Heart left ventricle (tissue), 16 donors: ENCODE measurements at regions of chr15 and their contacts with region 1.

Region 1: DNA sequence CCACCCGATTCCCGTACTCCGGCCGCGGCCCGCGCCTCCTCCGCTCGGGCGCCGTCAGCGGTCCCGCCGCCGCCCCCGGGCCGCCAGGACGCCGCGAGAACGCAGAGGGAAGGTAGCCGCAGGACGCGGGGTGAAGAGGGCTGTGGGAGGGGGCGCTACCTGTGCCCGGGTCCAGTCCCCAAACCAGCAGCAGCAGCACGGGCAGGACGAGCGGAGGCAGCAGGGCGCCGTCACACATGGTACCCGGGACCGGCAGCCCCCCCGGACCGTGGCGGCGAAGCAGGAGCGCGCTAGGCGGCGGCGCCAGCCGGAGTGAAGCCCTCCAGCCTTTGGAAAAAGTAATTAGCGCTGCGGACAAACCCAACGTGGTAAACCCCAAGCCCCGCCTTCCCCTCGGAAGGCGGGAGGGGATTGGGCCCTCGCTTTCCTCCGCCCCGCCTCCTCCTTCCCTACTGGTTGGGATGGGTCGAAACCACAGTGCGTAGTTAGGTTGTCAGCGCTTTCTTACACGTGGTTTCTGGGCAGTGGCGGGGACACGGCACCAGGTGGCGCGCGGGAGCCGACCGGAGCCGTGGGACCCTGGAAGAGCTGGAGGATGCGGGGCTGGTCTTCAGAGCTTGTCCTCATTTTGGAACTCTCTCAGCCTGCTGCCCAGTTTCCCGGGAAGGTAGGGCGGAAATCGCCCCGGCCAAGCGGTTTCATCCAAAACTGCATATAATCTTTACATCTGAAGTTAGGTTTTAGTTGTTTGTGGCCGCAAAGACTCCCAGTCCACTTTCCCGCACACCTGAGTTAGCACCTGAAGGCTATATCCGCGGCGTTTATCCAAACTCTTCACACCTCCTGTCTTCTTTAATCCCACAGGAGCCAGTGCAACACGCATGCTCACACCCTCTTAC is at the start of gene ADAMTS17:
- DNase-seq: peak; percentile 94 to 97 (median 95)
- ATAC-seq: peak; percentile 99 to 100 (median 99)
- H3K4me3 ChIP-seq: peak within 1 kb of the TSS; percentile 61 to 95 (median 74)
- H3K27ac ChIP-seq: peak within 1 kb of the TSS in 8 of 12 donors; percentile 16 to 80 (median 45)
- H3K4me1 ChIP-seq: peaks cover 0 to 11% (median 6%) of the 10 kb centered on the region in 12 donors
- H3K27me3 ChIP-seq: peaks cover 0 to 28% (median 11%) of the 10 kb centered on the region in 9 donors
- CTCF ChIP-seq: peak; percentile 87 to 99 (median 94)
- POLR2A ChIP-seq: peak; percentile 77 to 95
- total RNA-seq, gene ADAMTS17: 0.52 to 2.4 (median 1.9) TPM

Region 2: GRCh38 chr15:98943601-98944151 is 1398.2 kb before region 1 on chr15:
- intact Hi-C with region 1: no loop called
- DNase-seq: peak in 4 of 5 donors; percentile 73 to 81 (median 78)
- ATAC-seq: peak; percentile 83 to 91 (median 86)
- H3K4me3 ChIP-seq: no peak overlapping the region
- H3K27ac ChIP-seq: peak overlapping the region in 11 of 12 donors; percentile 14 to 79 (median 72)
- H3K4me1 ChIP-seq: peaks cover 0 to 48% (median 19%) of the 10 kb centered on the region in 12 donors
- H3K27me3 ChIP-seq: no peaks in the 10 kb centered on the region
- CTCF ChIP-seq: peak in 1 of 12 donors; percentile 8
- POLR2A ChIP-seq: no peak

Region 3: DNA sequence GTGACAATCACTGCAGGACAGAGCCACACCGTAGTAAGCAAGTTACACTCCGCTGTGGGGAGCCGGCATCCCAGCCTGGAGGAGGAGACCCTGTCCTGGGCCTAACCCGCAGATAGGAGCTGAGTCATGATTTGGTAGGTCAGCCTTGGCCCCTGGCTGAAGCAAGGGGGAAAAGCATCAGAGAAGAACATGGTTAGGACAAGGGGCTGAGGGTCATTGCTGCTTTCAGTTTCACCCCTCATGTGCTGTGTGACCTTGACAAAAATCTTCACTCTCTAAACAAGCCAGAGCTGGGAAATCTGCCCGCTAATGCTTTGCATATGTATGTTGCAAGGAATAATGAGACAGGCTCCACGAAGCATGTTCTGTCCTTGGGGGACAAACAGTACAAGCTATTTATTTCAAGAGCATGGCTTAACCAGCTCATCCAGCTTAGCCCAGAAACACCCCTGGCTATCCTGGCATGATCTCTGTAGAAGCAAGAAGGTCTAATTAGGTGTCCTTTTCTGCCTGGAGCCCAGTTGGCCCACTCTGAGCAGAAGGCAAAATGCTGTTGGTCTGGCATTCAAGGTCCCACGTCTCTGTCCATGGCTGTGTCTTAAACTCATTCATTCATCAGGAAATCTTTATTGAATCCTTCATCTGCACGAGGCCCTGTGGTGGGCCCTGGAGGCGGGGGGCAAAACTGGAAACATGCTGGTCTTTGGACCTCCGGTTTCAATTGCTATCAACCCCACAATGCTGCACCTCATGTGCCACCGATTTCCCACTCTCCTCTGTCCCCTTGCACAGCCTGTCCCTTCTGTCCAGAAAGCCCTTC is 387.3 kb before region 1 on chr15:
- intact Hi-C with region 1: loop called in 1 of 10 experiments (anchors 10 kb)
- DNase-seq: peak in 1 of 5 donors; percentile 7
- ATAC-seq: no peak
- H3K4me3 ChIP-seq: no peak overlapping the region
- H3K27ac ChIP-seq: no peak overlapping the region
- H3K4me1 ChIP-seq: no peaks in the 10 kb centered on the region
- H3K27me3 ChIP-seq: peaks cover 0 to 1% (median 0%) of the 10 kb centered on the region in 9 donors
- CTCF ChIP-seq: no peak
- POLR2A ChIP-seq: no peak

Region 4: GRCh38 chr15:99961011-99961441 is 380.9 kb before region 1 on chr15:
- intact Hi-C with region 1: loop called in 5 of 10 experiments (anchors 2 to 10 kb)
- DNase-seq: peak in 2 of 5 donors; percentile 29 to 42
- ATAC-seq: peak in 3 of 4 donors; percentile 62 to 75 (median 68)
- H3K4me3 ChIP-seq: no peak overlapping the region
- H3K27ac ChIP-seq: no peak overlapping the region
- H3K4me1 ChIP-seq: no peaks in the 10 kb centered on the region
- H3K27me3 ChIP-seq: peaks cover 0 to 8% (median 0%) of the 10 kb centered on the region in 9 donors
- CTCF ChIP-seq: peak in 10 of 12 donors; percentile 19 to 62 (median 47)
- POLR2A ChIP-seq: no peak

Region 5: DNA sequence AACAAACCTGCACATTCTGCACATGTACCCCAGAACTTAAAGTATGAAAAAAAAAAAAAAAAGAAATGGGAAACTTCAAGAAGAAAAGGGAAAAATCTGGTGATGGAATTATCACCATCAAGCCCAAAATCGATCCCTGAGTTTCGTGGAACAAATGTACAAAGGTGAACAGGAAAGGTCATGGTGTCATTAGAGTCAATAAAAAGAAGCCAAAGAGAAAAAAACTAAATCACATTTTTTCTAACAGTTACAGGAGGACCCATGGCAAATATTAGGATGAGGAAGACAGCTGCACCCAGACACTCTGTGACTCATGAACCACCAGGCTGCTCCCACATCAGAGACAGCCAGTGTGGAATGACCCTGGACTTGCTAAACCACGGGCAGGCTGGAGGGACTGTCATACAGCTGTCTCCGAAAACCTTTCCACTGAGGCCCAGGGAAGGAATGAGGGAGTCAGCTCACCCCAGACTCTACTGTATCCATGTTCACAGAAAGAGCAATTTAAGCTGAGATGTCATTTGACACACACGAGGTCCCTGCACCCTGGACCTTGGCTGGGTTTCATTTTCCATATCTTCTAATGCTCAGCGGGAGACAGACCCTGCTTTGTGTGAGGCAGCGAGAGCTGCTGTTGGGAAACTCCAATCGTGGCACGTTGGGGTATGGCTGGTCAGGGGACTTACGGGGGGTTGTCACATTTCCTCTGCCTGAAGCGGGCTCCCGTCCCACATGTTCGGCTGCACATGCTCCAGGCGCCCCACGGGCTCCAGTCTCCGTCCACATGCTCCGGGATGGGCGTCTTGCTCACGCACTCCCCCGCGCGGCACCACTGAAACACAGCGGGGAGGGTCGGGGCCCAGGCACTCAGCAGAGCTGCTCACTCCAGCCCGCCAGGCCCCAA is 210.3 kb before region 1 on chr15:
- intact Hi-C with region 1: loop called in 4 of 10 experiments (anchors 5 to 10 kb)
- DNase-seq: peak; percentile 71 to 81 (median 77)
- ATAC-seq: peak in 3 of 4 donors; percentile 91 to 94 (median 92)
- H3K4me3 ChIP-seq: peak overlapping the region in 9 of 12 donors; percentile 20 to 52 (median 39)
- H3K27ac ChIP-seq: peak overlapping the region in 8 of 12 donors; percentile 3 to 64 (median 44)
- H3K4me1 ChIP-seq: peaks cover 0 to 13% (median 0%) of the 10 kb centered on the region in 12 donors
- H3K27me3 ChIP-seq: no peaks in the 10 kb centered on the region
- CTCF ChIP-seq: peak; percentile 39 to 80 (median 57)
- POLR2A ChIP-seq: no peak

Region 6: DNA sequence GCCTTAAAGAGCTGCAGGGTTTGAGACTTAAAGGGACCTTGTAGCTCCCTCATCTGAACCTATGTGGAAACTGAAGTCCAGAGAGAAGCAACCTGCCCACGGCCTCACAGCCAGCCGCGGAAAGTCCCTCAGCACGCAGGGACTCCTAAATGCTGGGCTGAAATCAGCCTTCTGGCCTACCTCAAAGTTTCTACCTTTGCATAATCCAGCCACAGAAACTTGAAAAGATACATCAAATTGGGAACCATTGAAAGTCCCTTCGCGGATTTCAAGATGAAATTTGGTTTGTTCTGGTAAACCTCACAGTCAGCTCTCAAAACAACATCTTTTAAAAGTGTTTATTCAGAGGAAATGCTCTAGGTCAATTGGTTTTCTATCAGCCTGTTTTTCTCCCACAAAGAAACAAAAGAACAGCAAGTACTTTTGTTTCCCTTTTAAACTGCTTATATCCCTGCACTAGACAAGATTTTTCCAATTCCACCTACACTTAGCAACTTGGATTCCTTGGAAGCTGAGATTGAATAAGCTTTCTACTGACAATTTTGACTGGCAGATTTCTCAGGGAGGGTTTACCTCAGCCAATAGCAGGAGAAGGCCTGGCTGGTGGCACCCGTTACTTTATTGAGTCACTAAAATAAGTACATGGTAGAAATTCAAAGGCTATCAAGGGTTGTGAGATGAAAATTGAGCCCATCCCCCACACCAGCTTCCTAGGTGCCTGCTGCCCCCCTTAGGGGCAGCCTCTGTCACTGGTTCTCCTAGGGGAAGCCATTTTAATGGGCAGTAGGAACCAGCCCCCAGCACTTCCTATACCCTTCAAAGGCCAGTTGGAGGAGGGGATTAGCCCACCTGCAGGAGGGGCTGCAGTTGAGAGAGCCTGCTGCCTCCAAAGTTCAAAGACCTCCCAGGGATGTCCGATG is 171.4 kb before region 1 on chr15:
- intact Hi-C with region 1: loop called in 1 of 10 experiments (anchors 10 kb)
- DNase-seq: no peak
- ATAC-seq: no peak
- H3K4me3 ChIP-seq: no peak overlapping the region
- H3K27ac ChIP-seq: no peak overlapping the region
- H3K4me1 ChIP-seq: peaks cover 0 to 10% (median 0%) of the 10 kb centered on the region in 12 donors
- H3K27me3 ChIP-seq: no peaks in the 10 kb centered on the region
- CTCF ChIP-seq: no peak
- POLR2A ChIP-seq: no peak

Region 7: DNA sequence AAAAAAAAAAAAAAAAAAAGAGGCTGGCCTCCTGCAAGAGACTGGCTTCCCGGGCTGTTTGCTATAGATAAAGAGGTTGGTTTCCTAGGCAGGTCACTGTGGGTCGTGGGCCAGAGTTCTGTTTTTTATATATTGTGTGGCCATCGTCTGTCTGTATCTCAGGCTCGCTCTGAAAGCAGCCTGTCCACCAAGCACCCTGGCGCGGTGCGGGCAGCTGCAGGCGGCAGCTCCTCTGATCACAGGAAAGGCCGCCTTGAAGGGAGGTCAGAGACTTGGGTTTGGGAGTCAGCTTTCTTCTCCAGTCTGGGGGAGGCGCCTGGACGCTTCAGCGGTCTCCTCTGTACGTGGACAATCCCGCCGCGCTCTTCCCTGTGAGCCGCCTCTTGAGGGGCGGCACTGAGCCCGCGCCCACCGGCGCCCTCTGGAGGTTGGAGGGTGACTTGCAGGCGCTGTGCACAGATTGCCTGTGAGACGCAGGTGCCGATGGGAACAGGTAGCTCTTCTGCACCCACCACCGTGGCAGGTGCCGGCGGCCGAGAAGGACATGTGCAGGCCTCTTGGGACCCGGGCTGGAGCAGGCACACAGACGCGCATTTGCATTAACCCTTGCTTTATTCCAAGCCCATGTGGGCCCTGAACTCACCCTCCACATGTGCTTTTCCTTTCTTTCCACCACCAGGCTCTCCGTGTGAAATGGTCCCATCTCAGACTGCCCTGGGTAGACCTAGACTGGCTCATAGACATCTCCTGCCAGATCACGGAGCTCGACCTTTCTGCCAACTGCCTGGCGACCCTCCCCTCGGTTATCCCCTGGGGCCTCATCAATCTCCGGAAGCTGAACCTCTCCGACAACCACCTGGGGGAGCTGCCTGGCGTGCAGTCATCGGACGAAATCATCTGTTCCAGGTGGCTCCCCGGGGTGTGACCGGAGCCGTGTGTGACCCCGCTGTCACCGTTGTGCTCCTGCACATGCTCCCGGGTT is 666.5 kb after region 1 on chr15:
- intact Hi-C with region 1: loop called in 7 of 10 experiments (anchors 5 to 10 kb)
- DNase-seq: peak; percentile 70 to 92 (median 79)
- ATAC-seq: peak; percentile 82 to 89 (median 86)
- H3K4me3 ChIP-seq: peak overlapping the region in 11 of 12 donors; percentile 30 to 69 (median 50)
- H3K27ac ChIP-seq: peak overlapping the region in 1 of 12 donors; percentile 48
- H3K4me1 ChIP-seq: peaks cover 0 to 20% (median 11%) of the 10 kb centered on the region in 12 donors
- H3K27me3 ChIP-seq: no peaks in the 10 kb centered on the region
- CTCF ChIP-seq: peak; percentile 91 to 99 (median 97)
- POLR2A ChIP-seq: peak in 1 of 2 donors; percentile 14